ENCODE measurements at regions of chr9 and their contacts with region 1.

Region 1: GRCh38 chr9:130825809-130826208 is 9.2 kb upstream of the ABL1 start:
- DNase-seq: no peak
- ATAC-seq: no peak
- H3K4me3 ChIP-seq: no peak overlapping the region
- H3K27ac ChIP-seq: no peak overlapping the region
- H3K4me1 ChIP-seq: peaks cover 19% of the 10 kb centered on the region
- H3K27me3 ChIP-seq: no peaks in the 10 kb centered on the region
- CTCF ChIP-seq: no peak
- EP300 ChIP-seq: no peak
- POLR2A ChIP-seq: no peak
- RAD21 ChIP-seq: no peak

Region 2: DNA sequence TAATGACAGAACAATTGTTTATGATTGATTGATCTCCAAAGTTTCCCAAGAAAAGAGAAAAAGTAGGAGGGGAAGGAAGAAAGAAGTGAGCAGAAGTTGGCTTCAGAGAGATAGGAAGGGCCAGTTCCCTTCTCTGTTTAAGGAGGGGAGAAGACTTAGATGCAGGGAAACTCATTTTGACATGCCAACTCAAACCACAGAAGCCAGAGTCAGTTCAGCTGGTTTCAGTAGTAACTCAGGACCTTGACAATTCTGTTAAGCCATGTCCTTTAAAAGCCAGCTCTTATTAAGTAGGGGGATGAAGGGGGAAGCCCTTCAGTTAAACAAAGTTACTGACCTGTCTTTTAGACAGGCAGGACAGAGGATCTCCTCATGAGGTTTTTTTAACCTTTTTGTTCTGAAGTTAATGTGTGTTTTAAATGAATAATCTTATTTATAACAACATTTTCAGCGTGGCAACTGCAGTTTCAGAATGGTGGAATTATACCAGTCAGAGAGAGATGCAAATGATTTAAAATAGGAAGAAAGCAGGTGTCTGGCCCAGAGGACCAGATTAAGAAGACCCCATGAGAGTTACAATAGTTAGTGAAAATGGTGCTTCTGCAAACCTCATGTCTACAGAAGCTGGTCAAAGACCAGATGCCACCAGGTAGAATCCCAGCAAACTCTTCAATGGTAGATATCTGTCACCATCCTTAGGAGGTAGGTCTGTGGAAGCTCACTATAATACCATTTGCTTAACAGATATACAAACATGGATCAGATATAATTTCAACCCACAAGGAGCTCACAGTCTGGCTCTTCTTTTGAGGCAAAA is 20.1 kb before region 1 on chr9:
- CTCF ChIA-PET with region 1: no interaction called
- POLR2A ChIA-PET with region 1: no interaction called
- in situ Hi-C with region 1: no loop called
- intact Hi-C with region 1: no loop called
- DNase-seq: no peak
- ATAC-seq: no peak
- H3K4me3 ChIP-seq: no peak overlapping the region
- H3K27ac ChIP-seq: no peak overlapping the region
- H3K4me1 ChIP-seq: no peaks in the 10 kb centered on the region
- H3K27me3 ChIP-seq: no peaks in the 10 kb centered on the region
- CTCF ChIP-seq: no peak
- EP300 ChIP-seq: no peak
- POLR2A ChIP-seq: no peak
- RAD21 ChIP-seq: no peak

Region 3: GRCh38 chr9:130846487-130847326 is 20.9 kb after region 1 on chr9:
- CTCF ChIA-PET with region 1: no interaction called
- POLR2A ChIA-PET with region 1: no interaction called
- in situ Hi-C with region 1: no loop called
- intact Hi-C with region 1: loop called (anchors 1 kb)
- DNase-seq: no peak
- ATAC-seq: no peak
- H3K4me3 ChIP-seq: no peak overlapping the region
- H3K27ac ChIP-seq: no peak overlapping the region
- H3K4me1 ChIP-seq: peaks cover 25% of the 10 kb centered on the region
- H3K27me3 ChIP-seq: no peaks in the 10 kb centered on the region
- CTCF ChIP-seq: no peak
- EP300 ChIP-seq: no peak
- POLR2A ChIP-seq: no peak
- RAD21 ChIP-seq: no peak

Measured in HepG2 (cell line).